Heart right ventricle (tissue), 16 donors: ENCODE measurements at regions of chr3 and their contacts with region 1.

Region 1: DNA sequence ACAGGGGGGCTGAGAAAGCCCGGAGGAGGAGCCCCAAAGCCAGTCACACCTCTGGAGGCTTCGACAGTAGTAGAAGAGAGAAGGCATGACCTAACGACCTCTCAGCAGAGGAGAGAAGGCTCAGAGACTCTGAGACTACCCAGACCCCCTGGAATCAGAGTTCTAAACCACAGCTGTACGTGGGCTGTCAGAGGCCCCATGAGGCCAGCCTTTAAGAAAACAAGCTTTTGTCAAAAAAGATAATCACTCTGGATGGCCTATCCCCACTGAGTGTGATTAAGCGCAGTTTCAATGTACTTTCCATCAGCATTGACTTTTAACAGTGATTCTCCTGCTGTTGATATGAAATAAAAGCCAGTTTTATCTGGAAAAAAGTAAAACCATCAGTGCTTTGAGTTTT is 330.3 kb downstream of the CLSTN2 start:
- DNase-seq: no peak
- ATAC-seq: peak in 4 of 8 donors; percentile 9 to 55 (median 35)
- H3K4me3 ChIP-seq: no peak overlapping the region
- H3K27ac ChIP-seq: no peak overlapping the region
- H3K4me1 ChIP-seq: peaks cover 0 to 7% (median 0%) of the 10 kb centered on the region in 9 donors
- H3K27me3 ChIP-seq: no peaks in the 10 kb centered on the region
- CTCF ChIP-seq: no peak

Region 2: GRCh38 chr3:140252812-140253656 is 12.3 kb before region 1 on chr3:
- intact Hi-C with region 1: loop called in 1 of 10 experiments (anchors 1 kb)
- DNase-seq: no peak
- ATAC-seq: no peak
- H3K4me3 ChIP-seq: no peak overlapping the region
- H3K27ac ChIP-seq: no peak overlapping the region
- H3K4me1 ChIP-seq: peaks cover 0 to 3% (median 0%) of the 10 kb centered on the region in 9 donors
- H3K27me3 ChIP-seq: no peaks in the 10 kb centered on the region
- CTCF ChIP-seq: no peak

Region 3: DNA sequence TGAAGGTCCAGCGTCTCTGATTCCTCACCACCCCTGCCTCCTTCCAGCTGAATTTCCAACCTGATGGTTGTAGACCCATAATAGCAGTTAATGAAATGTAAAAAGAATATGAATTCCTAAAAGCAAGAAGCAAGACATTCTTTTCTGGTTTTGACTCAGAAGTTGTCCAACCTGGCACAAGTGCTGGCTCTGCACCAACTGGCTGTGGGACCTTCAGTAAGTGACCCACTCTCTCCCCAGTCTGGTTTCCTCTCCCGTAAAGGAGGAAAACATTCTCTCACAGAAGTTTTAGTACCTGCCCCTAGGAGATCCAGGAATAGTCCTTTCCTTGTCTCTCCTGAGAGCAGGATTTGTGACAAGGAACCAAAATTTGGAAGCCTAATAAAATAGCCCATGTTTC is 175.7 kb after region 1 on chr3:
- intact Hi-C with region 1: no loop called
- DNase-seq: no peak
- ATAC-seq: peak in 1 of 8 donors; percentile 47
- H3K4me3 ChIP-seq: no peak overlapping the region
- H3K27ac ChIP-seq: no peak overlapping the region
- H3K4me1 ChIP-seq: peaks cover 0 to 23% (median 5%) of the 10 kb centered on the region in 9 donors
- H3K27me3 ChIP-seq: no peaks in the 10 kb centered on the region
- CTCF ChIP-seq: no peak